H1 (cell line): ENCODE measurements at regions of chr6 and their contacts with region 1.

Region 1: DNA sequence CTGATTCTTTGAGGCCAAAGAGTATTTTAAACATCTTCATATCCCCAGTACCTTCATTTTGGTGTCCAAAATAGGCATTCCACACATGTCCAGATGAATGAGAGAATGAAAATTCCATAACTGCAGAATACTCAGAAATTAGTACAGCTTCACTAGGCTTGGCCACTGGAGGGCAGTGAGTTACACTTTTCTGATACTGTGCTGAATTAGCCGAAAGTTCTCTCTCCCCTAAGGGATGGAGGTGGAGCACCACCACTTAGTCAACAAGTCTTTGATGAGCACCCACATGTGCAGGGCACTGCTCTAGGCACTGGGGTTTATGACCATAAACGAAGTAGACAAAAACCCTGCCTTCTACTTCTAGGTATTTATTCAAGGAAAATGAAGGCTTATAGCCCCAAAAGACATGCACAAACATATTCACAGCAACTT is 46.0 kb upstream of the TMEM217 start:
- DNase-seq: no peak
- H3K4me3 ChIP-seq: no peak overlapping the region
- H3K27ac ChIP-seq: no peak overlapping the region
- H3K4me1 ChIP-seq: no peaks in the 10 kb centered on the region
- H3K27me3 ChIP-seq: no peaks in the 10 kb centered on the region
- CTCF ChIP-seq: peak in 2 of 3 experiments; percentile 34 to 57; a peak in 2 of 4 replicates
- EP300 ChIP-seq: no peak
- POLR2A ChIP-seq: no peak
- RAD21 ChIP-seq: peak; percentile 11 to 34; a peak in 2 of 4 replicates

Region 2: DNA sequence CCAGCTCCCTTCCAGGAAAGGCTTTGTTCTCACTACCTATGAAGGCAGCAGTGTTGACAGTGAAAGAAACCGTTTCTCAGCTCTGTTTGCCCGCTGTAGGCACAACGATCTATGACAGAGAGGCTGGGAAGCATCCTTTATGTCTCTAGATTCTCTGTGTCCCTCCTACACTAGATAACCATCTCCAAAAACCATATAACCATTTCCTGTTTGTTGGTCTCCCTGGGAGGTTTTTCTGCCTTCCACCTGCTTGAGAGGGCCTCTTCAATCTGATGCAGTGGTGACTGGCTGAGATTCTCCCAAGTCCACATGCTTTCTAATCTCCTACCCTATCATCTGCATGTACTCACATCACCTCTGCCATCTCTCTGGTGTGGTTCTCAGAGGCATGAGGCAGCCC is 14.0 kb before region 1 on chr6:
- CTCF ChIA-PET with region 1: interaction called, 23 read pairs
- POLR2A ChIA-PET with region 1: no interaction called
- DNase-seq: no peak
- H3K4me3 ChIP-seq: no peak overlapping the region
- H3K27ac ChIP-seq: no peak overlapping the region
- H3K4me1 ChIP-seq: no peaks in the 10 kb centered on the region
- H3K27me3 ChIP-seq: no peaks in the 10 kb centered on the region
- CTCF ChIP-seq: no peak
- EP300 ChIP-seq: no peak
- POLR2A ChIP-seq: no peak
- RAD21 ChIP-seq: no peak

Region 3: GRCh38 chr6:37314487-37315156 is 10.7 kb after region 1 on chr6:
- CTCF ChIA-PET with region 1: interaction called, 43 read pairs
- POLR2A ChIA-PET with region 1: interaction called, 4 read pairs
- DNase-seq: peak; percentile 17 to 54
- H3K4me3 ChIP-seq: no peak overlapping the region
- H3K27ac ChIP-seq: no peak overlapping the region
- H3K4me1 ChIP-seq: no peaks in the 10 kb centered on the region
- H3K27me3 ChIP-seq: no peaks in the 10 kb centered on the region
- CTCF ChIP-seq: peak; percentile 60 to 84 (median 83)
- EP300 ChIP-seq: no peak
- POLR2A ChIP-seq: no peak
- RAD21 ChIP-seq: peak; percentile 56 to 70

Region 4: DNA sequence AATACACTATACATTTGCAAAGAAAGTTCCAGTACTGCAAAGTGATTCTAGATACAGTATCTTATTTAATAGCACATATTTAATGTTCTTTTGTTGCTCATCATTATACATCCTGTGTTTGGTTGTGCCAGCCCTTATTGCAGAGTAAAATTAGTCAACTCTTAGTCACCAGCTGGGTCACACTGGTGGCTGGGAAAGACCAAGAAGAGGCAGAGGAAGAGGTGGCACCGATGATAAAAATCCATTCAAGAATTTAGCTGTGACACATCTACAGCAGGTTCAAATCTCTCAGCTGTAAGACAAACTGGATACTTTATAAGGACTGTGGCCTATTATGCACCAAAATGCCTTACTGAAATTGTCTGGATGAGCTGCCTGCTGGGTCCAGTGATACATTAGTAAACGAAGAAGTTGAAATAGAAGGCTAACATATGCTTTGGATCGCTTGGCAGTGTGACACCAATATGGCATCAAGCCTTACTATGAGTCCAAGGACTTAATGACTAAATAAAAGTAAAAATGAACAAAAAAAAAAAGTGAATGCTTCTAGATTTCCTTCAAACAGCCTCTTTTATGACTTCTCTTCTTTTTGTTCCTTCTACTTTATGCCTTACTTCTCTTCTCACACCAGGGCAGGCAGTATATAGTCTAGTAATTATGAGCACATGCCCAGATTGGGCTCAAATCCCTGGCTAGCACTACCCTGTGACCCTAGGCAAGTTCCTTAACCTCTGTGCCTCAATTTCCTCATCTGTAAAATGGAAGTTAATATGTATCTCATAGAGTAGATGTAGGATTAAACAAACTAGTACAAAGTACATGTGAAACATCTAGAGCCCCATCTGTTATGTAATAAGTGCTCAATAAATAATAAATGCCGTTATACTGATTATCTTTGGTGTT is 20.4 kb after region 1 on chr6:
- CTCF ChIA-PET with region 1: interaction called, 21 read pairs
- POLR2A ChIA-PET with region 1: interaction called, 4 read pairs
- DNase-seq: no peak
- H3K4me3 ChIP-seq: no peak overlapping the region
- H3K27ac ChIP-seq: no peak overlapping the region
- H3K4me1 ChIP-seq: no peaks in the 10 kb centered on the region
- H3K27me3 ChIP-seq: no peaks in the 10 kb centered on the region
- CTCF ChIP-seq: no peak
- EP300 ChIP-seq: no peak
- POLR2A ChIP-seq: no peak
- RAD21 ChIP-seq: no peak